ENCODE measurements at regions of chr5 and their contacts with region 1.

Region 1: DNA sequence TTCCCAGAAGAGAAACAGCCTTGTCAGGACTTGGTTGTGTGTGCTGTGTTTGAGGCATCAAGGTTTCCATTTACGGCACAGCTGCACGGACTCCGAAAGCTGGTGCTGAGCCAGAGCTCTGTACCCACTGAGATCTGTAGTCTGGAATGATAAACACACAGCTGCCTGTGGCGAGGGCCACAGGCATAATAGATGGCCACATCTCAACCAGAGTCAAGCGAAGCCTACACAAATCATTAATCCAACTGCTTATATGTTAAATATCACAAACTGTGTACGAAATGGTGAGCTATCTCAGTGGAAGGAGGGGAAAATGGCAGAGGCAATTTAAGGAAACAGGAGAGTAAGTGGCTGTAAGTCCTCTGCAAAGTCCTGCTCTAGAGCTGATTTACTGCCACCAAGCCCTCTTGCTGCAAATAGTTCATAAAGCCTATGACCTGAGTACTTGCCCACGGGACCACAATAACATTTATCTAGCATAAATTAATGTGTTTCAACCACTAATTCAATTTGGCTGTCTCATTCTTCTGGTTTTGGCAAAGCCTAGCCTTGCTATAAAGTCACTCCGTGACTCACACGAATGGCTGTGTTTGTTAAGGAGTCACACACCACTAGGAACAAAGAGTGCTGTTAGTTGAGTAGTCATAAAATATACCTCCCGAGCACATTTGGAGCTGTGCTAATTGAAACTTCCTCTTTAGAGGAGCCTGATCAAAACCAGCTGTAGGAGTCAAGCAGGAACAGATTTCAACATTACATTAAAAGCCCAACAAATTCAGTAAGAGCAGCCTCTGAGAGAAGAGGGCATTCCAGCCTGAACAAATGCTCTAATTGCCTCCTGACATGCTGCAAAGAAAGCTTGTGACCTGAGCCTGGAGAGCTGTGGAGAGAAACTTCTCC is 738.6 kb upstream of the ZNF608 start:
- DNase-seq: peak; percentile 32
- H3K4me3 ChIP-seq: peak overlapping the region; percentile 9 to 29
- H3K27ac ChIP-seq: peak overlapping the region; percentile 83 to 100
- H3K4me1 ChIP-seq: peaks cover 29 to 64% of the 10 kb centered on the region in 2 experiments; a peak in 3 of 4 replicates
- H3K27me3 ChIP-seq: no peaks in the 10 kb centered on the region
- CTCF ChIP-seq: no peak
- EP300 ChIP-seq: peak; percentile 94 to 100
- RAD21 ChIP-seq: peak; percentile 45; the same call in 1 of the 2 replicates

Region 2: DNA sequence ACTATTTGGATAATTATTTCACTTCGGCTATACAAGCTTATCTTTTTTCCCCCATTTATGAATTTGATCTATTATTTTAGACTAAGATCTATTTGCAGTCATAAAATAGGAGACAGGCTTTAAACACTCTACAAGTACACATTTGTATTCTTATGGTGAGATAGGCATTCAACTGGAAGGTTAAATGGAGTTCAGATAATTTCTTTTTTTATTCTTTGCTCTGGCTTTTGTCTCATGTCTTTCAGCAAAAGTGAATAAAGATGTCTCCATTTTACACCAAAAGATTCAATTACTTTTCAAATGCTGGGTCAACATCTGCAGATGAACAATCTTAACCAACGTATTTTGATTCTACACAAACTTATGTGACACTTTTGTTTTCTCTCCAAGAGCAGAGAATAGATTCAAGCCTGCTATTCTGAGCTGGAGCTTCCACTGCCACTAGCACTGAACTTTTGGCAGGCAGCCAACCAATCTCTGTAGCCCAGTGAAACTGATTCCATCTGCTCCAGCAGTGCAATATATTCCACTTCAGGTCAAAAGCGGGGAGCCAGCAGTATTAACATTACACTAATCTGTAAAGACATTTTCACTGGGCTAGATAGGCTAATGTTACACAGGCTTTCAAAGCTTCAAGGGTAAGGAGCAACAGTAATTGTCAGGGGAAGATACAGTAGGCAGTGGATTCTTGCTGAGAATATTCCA is 286.6 kb before region 1 on chr5:
- CTCF ChIA-PET with region 1: no interaction called
- POLR2A ChIA-PET with region 1: interaction called, 14 read pairs
- DNase-seq: peak; percentile 56
- H3K4me3 ChIP-seq: no peak overlapping the region
- H3K27ac ChIP-seq: peak overlapping the region; percentile 28 to 78; a peak in 3 of 4 replicates
- H3K4me1 ChIP-seq: peaks cover 11 to 48% of the 10 kb centered on the region in 2 experiments
- H3K27me3 ChIP-seq: no peaks in the 10 kb centered on the region
- CTCF ChIP-seq: no peak
- EP300 ChIP-seq: peak; percentile 66 to 86; a peak in 3 of 4 replicates
- RAD21 ChIP-seq: peak; percentile 35

Region 3: DNA sequence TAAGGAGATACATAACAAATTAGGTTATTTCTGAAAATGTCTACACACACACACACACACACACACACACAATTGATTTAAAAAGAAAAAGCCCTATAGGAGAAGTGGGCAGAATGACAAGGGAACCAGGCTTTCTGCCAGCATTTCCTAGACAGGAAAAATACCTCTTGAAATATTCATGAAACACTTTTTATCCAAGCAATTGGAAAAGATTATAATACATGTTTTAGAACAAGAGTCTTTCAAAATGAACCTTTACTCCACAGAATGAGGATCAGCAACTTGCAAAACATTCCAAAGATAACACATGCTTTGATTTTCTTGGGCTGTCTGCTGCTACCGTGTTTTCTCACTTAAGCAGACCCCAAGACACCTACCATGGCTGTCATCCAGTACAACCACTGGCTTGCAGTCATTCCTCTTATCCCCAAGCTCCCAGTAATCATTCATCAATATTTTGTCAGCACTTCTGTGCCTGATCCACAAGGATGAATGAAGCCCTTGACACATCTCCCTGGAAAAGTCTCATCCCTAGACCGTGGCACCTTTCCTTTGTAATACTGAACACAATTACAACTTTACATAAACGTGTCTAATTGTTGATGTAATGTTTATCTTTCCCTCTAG is 21.4 kb before region 1 on chr5:
- CTCF ChIA-PET with region 1: no interaction called
- POLR2A ChIA-PET with region 1: no interaction called
- DNase-seq: no peak
- H3K4me3 ChIP-seq: no peak overlapping the region
- H3K27ac ChIP-seq: no peak overlapping the region
- H3K4me1 ChIP-seq: peaks cover 0 to 2% of the 10 kb centered on the region in 2 experiments; a peak in 1 of 4 replicates
- H3K27me3 ChIP-seq: no peaks in the 10 kb centered on the region
- CTCF ChIP-seq: no peak
- EP300 ChIP-seq: no peak
- RAD21 ChIP-seq: no peak

Region 4: GRCh38 chr5:125550274-125550673 is 65.3 kb after region 1 on chr5:
- CTCF ChIA-PET with region 1: interaction called, 4 read pairs
- POLR2A ChIA-PET with region 1: interaction called, 18 read pairs
- DNase-seq: peak; percentile 35
- H3K4me3 ChIP-seq: no peak overlapping the region
- H3K27ac ChIP-seq: peak overlapping the region; percentile 4 to 92; a peak in 2 of 4 replicates
- H3K4me1 ChIP-seq: peaks cover 13 to 18% of the 10 kb centered on the region in 2 experiments; a peak in 3 of 4 replicates
- H3K27me3 ChIP-seq: no peaks in the 10 kb centered on the region
- CTCF ChIP-seq: no peak
- EP300 ChIP-seq: peak; percentile 77 to 87
- RAD21 ChIP-seq: peak; percentile 24

Region 5: GRCh38 chr5:125575891-125576505 is 91.0 kb after region 1 on chr5:
- CTCF ChIA-PET with region 1: no interaction called
- POLR2A ChIA-PET with region 1: interaction called, 15 read pairs
- DNase-seq: peak; percentile 55
- H3K4me3 ChIP-seq: no peak overlapping the region
- H3K27ac ChIP-seq: peak overlapping the region in 1 of 2 experiments; percentile 90; a peak in 2 of 4 replicates
- H3K4me1 ChIP-seq: peaks cover 0 to 14% of the 10 kb centered on the region in 2 experiments; a peak in 2 of 4 replicates
- H3K27me3 ChIP-seq: no peaks in the 10 kb centered on the region
- CTCF ChIP-seq: no peak
- EP300 ChIP-seq: peak in 1 of 2 experiments; percentile 15; a peak in 1 of 4 replicates
- RAD21 ChIP-seq: peak; percentile 29; the same call in 1 of the 2 replicates

Region 6: GRCh38 chr5:126508962-126509279 is 1023.9 kb after region 1 on chr5:
- CTCF ChIA-PET with region 1: no interaction called
- POLR2A ChIA-PET with region 1: no interaction called
- DNase-seq: no peak
- H3K4me3 ChIP-seq: no peak overlapping the region
- H3K27ac ChIP-seq: no peak overlapping the region
- H3K4me1 ChIP-seq: no peaks in the 10 kb centered on the region
- H3K27me3 ChIP-seq: no peaks in the 10 kb centered on the region
- CTCF ChIP-seq: no peak
- EP300 ChIP-seq: no peak
- RAD21 ChIP-seq: no peak

Measured in SK-N-SH (cell line).